AG04450 (cell line): ENCODE measurements at regions of chr6 and their contacts with region 1.

Region 1: GRCh38 chr6:37018198-37019064 is 13.0 kb downstream of the FGD2 start:
- DNase-seq: peak; percentile 82
- H3K4me3 ChIP-seq: no peak overlapping the region
- H3K27ac ChIP-seq: no peak overlapping the region
- H3K27me3 ChIP-seq: no peaks in the 10 kb centered on the region
- CTCF ChIP-seq: peak; percentile 95

Region 2: DNA sequence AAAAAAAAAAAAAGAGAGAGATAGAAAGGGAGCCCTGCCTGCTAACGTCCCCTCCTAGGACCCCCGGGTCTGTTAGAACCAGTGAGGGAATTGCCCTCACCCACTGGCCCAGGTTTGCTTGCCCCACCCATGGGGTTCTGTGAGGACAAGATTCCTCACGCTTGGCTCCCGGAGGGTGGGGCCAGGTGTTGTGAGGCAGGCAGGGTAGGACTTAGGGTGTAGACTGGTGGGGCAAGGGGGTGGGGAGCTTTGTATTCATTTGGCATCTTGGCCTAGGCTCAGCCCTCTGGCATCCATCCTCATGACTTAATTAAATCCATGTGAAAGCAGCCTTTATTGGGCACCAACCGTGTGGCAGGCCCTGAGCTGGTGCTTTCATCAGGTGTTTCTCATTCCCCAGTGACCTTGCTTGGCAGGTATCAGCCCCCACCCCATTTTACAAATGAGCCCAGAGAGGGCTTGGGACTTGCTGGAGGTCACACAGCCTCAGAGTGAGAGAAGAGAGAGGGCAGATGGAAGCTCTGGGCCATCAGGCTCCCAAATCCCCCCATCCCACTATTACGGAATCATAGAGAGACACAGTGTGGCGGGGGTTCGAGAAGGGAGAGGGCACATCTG is 301.8 kb before region 1 on chr6:
- CTCF ChIA-PET with region 1: no interaction called
- POLR2A ChIA-PET with region 1: no interaction called
- DNase-seq: no peak
- H3K4me3 ChIP-seq: no peak overlapping the region
- H3K27ac ChIP-seq: no peak overlapping the region
- H3K27me3 ChIP-seq: peaks cover 41% of the 10 kb centered on the region
- CTCF ChIP-seq: no peak

Region 3: DNA sequence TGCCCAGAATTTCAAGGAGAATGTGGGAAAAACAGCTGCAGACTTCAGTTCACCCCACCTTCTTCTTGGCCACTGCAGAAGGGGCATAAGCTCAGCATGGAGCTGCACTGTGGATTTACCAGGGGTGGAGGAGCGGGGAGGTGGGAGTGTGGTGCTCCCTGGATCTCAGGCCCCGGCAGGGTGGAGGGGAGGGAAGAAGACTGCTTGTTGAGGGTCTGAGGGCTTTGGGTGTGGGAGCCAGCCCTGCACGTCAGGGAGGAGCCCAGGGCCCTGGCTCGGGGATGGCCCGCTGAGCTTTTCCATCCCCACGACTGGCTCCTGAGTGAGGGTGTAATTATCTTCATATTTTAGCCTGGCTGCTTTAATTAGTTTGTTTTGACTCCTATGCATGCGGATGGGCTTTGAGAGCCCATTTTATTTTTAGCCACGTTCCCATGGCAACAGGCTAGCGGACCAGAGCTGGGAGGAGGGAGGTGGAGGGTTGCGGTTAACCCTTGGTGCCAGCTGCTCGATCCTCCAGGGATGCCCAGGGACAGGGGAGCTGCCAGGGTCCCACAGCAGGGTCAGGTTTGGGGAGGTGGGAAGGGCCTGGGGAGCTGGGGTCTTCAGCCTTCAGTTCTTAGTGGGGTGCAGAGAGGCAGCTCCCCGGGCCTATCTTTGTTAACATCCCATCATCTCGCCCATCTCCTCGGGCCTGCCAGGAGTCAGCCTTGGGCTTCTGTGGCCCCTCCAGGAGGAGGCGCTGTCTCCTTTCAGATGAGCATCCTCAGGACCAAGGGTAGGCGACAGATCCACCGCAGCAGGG is 252.6 kb before region 1 on chr6:
- CTCF ChIA-PET with region 1: interaction called, 210 read pairs
- POLR2A ChIA-PET with region 1: interaction called, 5 read pairs
- DNase-seq: peak; percentile 43
- H3K4me3 ChIP-seq: no peak overlapping the region
- H3K27ac ChIP-seq: no peak overlapping the region
- H3K27me3 ChIP-seq: no peaks in the 10 kb centered on the region
- CTCF ChIP-seq: peak; percentile 98

Region 4: DNA sequence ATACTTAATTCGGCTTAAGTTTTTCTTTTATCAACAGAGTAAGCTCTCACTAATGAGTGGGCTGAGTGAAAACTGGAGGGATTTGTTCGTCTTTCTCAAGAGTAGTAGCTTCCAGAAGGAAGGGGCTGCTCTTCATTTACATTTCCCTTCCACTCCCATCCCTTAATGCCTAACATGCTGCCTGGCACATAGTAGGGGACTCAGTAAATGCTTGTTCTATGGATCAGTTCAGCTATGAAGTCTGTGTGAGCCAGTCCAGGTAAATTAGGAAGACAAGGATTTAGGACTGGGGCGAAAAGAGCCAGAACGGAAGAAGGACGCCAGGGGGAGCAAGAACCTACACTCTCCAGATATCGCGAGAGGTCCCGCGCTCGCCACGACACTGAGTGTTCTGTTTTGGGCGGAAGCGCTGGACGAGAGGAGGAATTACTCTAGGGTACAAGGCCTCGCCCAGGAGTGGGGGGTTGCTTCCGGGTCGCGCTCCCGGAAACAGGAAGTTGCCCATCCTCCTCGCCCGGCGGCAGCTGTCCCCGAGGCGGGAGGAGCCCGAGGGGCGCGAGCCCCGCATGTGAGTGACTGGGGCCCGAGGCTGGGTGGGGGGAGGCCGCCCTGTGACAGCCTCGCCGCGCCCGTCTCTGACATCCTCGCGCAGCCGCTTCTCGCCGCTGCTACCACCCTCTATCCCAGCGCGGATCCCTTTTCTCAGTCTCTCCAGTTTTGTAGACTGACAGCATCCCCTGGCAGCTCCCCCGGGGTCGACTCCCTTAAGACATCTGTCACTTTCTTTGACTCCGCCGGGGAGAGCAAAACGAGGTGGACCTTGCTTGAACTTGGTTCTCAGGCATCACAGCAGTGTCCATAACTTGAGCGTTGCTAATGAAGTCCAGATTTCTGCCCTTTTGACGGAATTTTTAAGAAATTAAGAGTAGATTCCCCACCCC is 132.7 kb before region 1 on chr6 and contains the start of gene C6orf89:
- CTCF ChIA-PET with region 1: interaction called, 97 read pairs
- POLR2A ChIA-PET with region 1: interaction called, 7 read pairs
- DNase-seq: peak; percentile 95
- H3K4me3 ChIP-seq: peak within 1 kb of the TSS; percentile 85
- H3K27ac ChIP-seq: peak within 1 kb of the TSS; percentile 22
- H3K27me3 ChIP-seq: no peaks in the 10 kb centered on the region
- CTCF ChIP-seq: peak; percentile 85
- polyA plus RNA-seq, gene C6orf89: 59.7 and 60.4 TPM in 2 replicates

Region 5: GRCh38 chr6:36985808-36986703 is 32.4 kb before region 1 on chr6 and contains the start of gene MTCH1:
- CTCF ChIA-PET with region 1: interaction called, 20 read pairs
- POLR2A ChIA-PET with region 1: interaction called, 14 read pairs
- DNase-seq: peak; percentile 67
- H3K4me3 ChIP-seq: peak within 1 kb of the TSS; percentile 93
- H3K27ac ChIP-seq: peak within 1 kb of the TSS; percentile 69
- H3K27me3 ChIP-seq: peaks cover 4% of the 10 kb centered on the region
- CTCF ChIP-seq: no peak
- polyA plus RNA-seq, gene MTCH1: 149 and 160 TPM in 2 replicates

Region 6: GRCh38 chr6:37051138-37052026 is 33.0 kb after region 1 on chr6:
- CTCF ChIA-PET with region 1: interaction called, 12 read pairs
- POLR2A ChIA-PET with region 1: no interaction called
- DNase-seq: no peak
- H3K4me3 ChIP-seq: no peak overlapping the region
- H3K27ac ChIP-seq: no peak overlapping the region
- H3K27me3 ChIP-seq: no peaks in the 10 kb centered on the region
- CTCF ChIP-seq: peak; percentile 91

Region 7: DNA sequence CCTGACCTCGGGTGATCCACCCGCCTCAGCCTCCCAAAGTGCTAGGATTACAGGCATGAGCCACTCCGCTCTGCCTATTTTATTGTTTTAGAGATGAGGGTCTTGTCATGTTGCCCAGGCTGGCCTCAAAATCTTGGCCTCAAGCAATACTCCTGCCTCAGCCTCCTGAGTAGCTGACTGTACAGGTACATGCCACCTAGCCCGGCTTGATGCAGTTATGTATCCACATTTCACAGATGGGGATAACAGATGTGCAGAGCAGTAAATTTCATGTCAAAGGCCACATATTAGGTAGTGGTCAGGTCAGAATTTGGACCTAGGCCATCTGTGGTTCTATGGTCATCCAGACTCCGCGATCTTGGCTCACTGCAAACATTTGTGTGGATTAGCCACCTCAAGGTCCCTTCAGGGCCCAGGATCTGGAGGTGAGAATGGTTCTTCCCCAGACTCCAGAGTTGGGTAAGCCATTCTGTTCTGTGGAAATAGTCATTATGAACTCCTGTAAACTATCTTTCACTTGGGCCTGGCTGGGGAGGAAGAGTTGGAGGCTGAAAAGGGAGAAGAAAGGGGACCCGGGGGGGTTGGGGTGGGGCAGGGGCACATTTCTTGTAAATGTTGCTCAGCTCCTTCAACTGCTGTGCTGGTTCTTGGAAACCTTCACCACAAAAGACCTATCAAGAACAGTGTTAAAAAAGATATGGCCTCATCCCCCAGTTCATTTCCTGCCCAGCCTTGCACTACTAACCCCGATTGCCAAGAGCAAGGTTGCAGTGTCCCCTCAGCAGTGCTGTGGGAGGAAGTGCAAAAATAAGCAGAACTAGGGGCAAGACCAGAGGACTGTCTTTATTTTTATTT is 164.5 kb after region 1 on chr6:
- CTCF ChIA-PET with region 1: interaction called, 23 read pairs
- POLR2A ChIA-PET with region 1: no interaction called
- DNase-seq: no peak
- H3K4me3 ChIP-seq: no peak overlapping the region
- H3K27ac ChIP-seq: no peak overlapping the region
- H3K27me3 ChIP-seq: no peaks in the 10 kb centered on the region
- CTCF ChIP-seq: no peak

Region 8: GRCh38 chr6:38370653-38371601 is 1352.5 kb after region 1 on chr6:
- CTCF ChIA-PET with region 1: no interaction called
- POLR2A ChIA-PET with region 1: no interaction called
- DNase-seq: no peak
- H3K4me3 ChIP-seq: no peak overlapping the region
- H3K27ac ChIP-seq: no peak overlapping the region
- H3K27me3 ChIP-seq: no peaks in the 10 kb centered on the region
- CTCF ChIP-seq: no peak